GM10248 (cell line): ENCODE measurements at regions of chr9 and their contacts with region 1.

Region 1: GRCh38 chr9:133992780-133993634 is 883 bp upstream of the VAV2 start:
- DNase-seq: peak; percentile 90
- CTCF ChIP-seq: peak; percentile 53

Region 2: DNA sequence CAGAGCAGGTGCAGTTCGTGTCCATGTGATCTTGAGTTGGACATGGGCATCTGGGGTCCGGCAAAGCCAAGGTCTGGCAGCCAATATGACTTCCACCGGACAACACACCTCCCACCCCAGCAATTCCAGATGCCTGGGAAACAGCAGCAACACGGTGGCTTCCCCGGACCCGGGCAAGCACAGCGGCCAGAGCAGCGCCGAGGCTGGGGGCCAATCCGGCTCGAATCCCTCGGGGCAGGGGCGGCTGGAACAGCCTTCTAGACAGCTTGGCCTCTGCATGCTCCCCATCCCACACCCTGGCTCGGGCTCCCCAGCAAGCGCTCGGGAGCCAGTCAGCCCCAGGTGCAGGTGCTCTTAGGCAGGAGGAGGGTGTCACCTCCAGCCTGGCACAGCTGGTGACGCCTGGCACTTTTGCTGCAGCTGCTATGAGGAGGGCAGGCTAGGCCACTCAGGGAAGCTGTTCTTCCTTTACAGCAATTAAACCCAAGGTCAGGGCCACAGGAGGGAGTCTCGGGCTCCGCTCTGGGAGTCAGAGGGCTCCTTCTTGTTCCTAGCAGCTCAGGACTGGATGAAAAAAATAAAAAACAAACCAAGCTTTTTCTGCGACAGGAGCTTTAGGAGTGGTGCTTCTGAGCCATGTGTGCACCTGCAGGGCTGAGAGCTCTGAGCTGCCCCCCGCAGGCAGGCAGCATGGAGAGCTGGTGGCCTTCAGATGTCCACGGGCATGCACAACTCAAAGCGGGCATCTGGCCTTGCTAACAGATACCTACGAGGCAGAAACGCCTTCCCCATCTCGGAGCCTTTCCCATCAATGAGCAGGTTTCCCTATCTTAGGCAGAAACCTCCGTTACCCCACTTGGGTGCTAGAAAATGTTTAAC is 328.6 kb before region 1 on chr9:
- CTCF ChIA-PET with region 1: no interaction called
- POLR2A ChIA-PET with region 1: no interaction called
- DNase-seq: no peak
- CTCF ChIP-seq: peak; percentile 29

Region 3: GRCh38 chr9:133726401-133727276 is 266.4 kb before region 1 on chr9:
- CTCF ChIA-PET with region 1: interaction called, 17 read pairs
- POLR2A ChIA-PET with region 1: no interaction called
- DNase-seq: peak; percentile 66
- CTCF ChIP-seq: peak; percentile 49

Region 4: DNA sequence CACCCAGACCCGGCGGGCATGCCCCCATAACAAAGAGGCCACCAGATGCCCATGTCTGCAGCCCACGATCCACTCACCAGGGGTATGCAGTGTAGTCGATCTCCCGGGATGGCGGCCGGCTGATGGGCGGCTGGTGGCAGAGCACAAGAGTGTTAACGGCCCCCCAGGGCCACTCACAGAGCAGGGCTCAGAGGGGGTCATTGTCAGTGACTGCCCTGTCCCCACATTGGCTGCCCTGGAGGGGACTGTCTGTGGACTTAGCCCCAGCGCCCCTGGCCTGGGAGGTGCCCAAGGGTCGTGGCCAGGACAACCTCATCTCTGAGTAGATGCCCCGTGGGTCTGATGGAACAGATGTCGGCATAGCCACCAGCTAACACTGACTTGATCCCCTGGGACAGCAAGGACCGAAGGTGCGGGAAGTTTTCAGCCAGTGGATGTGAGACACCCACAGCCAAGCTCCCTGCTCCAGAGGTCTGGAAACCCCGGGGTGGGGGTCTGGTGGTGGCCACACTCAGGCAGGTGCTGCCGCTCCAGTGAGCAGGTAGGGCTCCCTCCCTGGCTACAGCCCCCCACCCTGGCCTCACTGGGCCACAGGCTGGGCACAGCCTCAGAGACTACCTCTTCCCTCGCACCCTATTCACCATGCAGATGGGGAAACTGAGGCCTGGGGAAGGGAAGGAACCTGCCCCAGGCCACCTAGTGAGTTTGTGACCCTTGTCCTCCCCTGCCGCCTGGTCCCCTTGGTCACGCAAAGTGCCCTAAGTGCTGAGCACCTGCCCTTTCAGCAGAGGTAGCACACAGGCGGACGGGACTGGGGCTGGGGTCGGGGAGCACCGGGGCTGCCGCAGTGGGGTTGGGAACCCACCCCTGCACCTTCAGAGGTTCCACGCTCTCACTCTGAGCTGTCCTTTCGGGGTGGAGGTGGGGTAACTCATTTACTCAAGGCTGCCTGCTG is 216.8 kb before region 1 on chr9:
- CTCF ChIA-PET with region 1: interaction called, 186 read pairs
- POLR2A ChIA-PET with region 1: no interaction called
- DNase-seq: no peak
- CTCF ChIP-seq: no peak

Region 5: DNA sequence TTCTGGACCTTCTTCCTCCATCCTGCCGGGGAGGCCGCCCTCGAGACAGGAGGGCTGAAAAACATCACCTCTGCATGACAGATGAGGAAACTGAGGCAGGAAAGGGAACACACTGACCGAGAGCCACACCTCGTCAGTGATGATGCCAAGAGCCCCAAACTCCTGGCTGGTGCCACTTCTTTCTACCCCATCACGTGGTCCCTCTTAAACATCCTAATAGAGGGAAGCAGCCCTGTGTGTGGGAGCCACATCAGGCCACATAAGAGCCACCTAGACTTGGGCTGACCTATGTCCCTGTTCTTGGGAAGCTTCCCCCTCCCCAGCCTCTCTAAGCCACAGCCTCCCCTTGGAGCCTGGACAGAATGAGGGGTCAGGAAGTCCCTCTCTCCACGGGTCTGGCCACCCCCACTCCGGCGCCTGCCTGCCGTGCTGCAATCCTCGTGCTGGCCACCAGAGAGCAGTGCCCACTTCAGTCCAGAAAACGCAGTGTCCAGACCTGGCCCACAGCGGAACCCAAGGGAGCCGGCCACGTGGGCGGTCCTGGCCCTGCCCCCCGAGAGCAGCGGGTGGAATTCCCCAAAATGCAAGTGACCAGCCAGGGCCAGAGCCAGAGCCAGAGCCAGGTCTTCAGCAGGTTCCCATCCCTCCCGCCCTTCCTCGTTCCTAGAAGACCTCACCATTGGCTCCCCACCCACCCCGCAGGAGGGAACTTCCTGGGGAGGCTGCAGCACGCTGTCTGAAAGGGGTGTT is 200.1 kb before region 1 on chr9:
- CTCF ChIA-PET with region 1: interaction called, 186 read pairs
- POLR2A ChIA-PET with region 1: no interaction called
- DNase-seq: peak; percentile 89
- CTCF ChIP-seq: peak; percentile 92

Region 6: DNA sequence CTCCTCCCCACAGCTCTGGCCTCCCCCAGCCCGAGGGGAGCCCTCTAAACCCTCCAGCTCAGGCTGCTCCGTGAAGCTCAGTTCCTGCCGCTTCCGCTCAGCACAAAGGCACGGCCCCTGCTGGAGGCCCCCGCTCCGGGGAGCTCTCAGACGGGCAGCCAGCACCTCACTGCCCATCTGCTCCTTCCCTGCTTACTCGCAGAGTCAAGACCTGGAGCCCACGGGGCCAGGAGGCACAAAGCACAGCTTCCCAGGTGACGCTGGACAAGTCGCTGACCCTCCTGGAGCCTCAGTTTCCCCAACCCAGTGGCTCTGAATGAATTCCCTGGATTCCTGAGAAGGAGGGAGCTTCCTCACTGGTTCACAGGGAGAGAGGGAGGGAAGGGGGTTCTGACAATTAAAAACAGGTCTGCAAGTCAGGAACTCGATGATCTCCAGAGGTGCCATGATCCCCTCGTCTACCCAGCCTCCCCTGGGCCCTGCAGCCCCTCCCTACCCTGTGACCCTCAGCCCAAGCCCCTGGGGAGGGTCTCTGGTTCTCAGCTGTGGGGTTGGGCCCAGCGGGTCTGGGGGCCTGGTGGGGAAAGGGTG is 37.1 kb before region 1 on chr9:
- CTCF ChIA-PET with region 1: interaction called, 23 read pairs
- POLR2A ChIA-PET with region 1: no interaction called
- DNase-seq: peak; percentile 76
- CTCF ChIP-seq: no peak

Region 7: DNA sequence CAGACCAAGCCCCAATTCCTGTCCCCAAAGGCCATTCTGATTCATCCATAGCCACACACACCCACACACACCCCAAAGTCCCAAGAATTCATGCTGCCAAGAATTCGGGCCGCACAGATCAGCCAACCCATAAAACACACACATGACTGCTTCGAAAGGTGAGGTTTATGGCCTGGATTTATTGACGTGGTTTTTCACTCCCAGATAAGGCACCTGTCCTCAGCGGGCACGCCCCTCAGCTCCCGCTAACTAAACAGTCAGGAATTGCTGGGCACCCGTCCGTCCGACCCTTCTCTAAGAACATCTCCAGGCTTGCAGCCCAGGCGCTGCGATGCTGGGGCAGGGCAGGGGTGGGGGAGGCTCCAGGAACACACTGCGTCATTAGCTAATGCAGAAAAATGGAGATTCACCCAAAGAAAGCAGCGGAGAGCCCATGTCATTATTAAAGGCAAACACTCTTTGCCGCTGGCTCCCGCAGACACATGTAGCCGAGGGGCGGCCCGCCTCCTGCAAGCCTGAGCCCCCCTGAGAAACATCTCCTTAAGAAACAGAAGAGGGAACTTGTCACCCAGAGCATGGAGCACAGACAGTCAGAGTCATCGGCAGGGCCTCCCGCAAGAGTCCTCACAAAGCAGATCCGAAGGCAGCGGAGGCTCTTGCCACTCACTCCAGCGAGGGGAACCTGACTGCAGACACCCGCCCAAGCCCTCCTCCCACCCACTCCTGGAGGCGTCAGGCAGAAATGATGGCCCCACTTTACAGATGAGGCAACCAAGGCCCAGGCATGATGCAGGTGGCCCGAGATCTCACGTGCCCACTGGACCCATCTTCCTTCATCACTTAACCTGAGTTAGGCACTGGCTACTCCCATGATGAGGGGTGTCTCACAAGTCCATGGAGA is 20.7 kb before region 1 on chr9:
- CTCF ChIA-PET with region 1: interaction called, 25 read pairs
- POLR2A ChIA-PET with region 1: interaction called, 3 read pairs
- DNase-seq: no peak
- CTCF ChIP-seq: no peak

Region 8: DNA sequence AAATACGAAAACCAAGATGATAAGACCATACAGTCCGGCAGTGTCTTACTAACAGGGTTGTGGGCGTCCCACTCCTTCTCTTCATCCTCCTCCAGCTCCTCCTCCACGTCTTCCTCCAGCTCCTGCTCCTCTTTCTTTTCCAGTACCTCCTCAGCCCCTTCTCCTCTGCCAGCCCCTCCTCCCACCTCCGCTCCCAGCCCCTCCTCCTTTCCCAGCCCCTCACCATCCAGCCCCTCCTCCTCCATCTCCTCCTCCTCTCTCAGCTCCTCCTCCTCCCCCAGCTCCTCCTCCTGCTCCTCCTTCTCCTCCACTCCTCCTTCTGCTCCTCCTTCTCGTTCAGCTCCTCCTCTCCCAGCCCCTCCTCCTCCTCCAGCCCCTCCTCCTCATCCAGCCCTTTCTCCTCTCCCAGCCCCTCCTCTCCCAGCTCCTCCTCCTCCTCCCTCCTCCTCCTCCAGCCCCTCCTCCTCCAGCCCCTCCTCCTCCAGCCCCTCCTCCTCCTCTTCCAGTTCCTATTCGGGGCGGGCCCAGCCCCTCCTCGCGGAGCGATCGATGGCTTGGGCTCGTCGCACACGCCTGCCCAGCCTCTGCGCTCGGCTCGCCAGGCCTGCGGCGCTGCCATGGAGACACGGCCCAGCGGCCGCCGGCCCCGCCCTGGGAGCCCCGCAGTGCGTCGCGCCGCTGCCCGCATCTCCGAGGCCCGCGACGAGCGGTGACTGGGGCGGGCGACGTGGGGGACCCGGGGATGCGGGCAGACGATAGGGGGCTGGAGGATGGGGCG is 32.0 kb after region 1 on chr9 and contains the start of gene BRD3OS:
- CTCF ChIA-PET with region 1: interaction called, 19 read pairs
- POLR2A ChIA-PET with region 1: no interaction called
- DNase-seq: peak; percentile 96
- CTCF ChIP-seq: no peak

Region 9: DNA sequence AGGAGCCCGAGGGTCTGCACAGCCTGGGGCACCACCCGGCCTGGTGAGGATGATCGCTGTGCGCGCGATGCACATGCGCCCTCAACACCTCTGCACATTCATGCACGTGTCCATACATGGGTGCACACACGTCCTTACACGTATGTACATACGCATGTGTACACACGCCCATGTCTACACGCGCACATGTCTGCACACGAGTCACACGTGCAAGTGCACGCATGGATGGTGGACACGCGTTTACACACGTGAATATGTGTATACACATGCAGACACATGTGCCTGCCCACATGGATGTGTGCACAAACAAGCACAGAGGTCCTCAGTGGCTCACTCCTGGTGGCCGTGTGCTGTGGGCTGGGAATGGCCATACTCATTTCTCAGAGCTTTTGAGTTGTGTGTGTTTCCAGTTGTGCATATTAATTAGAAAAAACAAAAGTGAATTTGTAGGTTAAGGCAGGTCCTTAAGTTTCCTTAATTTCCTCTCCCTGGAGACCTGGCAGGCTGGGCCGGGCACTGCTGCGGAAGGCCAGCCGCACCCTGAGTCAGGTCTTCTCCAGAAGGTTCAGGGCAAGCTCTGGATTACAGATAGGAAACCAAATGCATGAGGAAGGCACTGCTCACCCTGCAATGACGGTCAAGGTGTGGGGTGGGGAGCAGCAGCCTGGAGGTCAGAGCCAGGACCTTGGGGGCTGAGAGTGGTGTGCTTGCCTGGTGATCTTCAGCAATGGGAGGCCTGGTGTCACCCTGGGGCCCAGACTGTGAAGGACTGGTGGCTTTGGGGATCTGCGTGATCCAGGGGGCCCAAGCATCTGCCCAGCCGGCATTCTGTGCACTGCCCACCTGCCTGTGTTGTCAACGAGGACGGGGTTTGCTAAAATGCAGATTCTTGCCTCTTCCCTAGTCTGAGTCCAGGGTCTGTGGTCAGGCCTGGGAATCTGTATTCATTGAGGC is 172.6 kb after region 1 on chr9:
- CTCF ChIA-PET with region 1: no interaction called
- POLR2A ChIA-PET with region 1: no interaction called
- DNase-seq: no peak
- CTCF ChIP-seq: no peak